Endothelial cell of umbilical vein (primary cell): ENCODE measurements at regions of chr2 and their contacts with region 1.

Region 1: DNA sequence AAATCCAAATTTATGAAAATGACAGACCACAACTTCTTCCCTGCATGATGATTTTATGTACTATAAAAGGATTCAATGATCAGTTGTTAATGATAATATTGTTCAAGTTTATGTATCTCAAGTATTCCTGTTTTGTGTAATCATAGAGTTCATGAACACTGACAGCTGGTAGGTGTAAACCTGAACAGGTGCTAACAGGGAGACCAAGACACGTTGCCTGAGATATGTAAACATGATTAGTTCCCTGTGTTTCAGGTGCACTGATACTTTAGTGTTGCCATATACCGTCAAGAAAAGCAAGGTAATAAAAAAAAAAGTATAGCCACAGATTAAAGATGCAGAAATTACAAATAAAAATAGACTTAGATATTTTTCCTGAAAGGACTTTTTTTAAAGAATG is 131.8 kb downstream of the BAZ2B start:
- DNase-seq: no peak
- H3K4me3 ChIP-seq: no peak overlapping the region
- H3K27ac ChIP-seq: no peak overlapping the region
- H3K4me1 ChIP-seq: no peaks in the 10 kb centered on the region
- H3K27me3 ChIP-seq: no peaks in the 10 kb centered on the region
- CTCF ChIP-seq: no peak
- POLR2A ChIP-seq: no peak

Region 2: GRCh38 chr2:159427048-159427447 is 57.5 kb before region 1 on chr2:
- CTCF ChIA-PET with region 1: no interaction called
- POLR2A ChIA-PET with region 1: no interaction called
- dilution Hi-C with region 1: no loop called
- intact Hi-C with region 1: loop called (anchors 2 kb)
- DNase-seq: no peak
- H3K4me3 ChIP-seq: no peak overlapping the region
- H3K27ac ChIP-seq: no peak overlapping the region
- H3K4me1 ChIP-seq: peaks cover 6% of the 10 kb centered on the region
- H3K27me3 ChIP-seq: no peaks in the 10 kb centered on the region
- CTCF ChIP-seq: no peak
- POLR2A ChIP-seq: no peak

Region 3: DNA sequence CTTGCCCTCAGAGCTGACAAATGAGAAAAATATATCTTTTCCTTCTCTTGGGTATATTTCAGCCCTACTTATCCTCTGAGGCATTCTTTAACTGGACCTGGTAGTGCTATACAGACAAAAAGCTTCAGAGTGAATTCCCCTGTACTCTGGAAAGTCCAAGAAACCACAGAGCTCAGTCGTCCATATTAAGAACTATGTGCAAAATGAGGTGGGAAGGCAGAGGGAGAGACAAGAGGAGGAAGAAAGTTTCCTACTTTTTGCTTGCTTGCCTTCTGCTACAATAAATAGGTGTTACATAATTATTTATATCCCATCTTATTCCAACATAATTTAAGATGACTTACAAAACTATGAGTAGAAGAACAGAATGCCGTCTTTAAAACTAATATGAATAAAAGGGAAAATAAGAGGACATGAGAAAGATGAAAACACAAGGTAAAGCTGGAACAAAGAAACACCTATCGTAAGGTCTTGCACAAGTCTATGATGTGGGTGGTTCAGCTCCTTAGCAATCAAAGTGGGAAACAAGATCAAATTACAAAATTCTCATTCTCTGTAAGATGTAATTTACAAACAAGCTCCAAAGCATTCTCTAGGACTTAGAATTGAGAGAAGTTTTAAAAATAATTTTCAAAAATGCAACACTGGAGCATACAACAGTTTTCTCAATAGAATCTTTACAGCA is 33.9 kb after region 1 on chr2:
- CTCF ChIA-PET with region 1: interaction called, 3 read pairs
- POLR2A ChIA-PET with region 1: no interaction called
- dilution Hi-C with region 1: no loop called
- intact Hi-C with region 1: loop called (anchors 1 kb)
- DNase-seq: no peak
- H3K4me3 ChIP-seq: no peak overlapping the region
- H3K27ac ChIP-seq: no peak overlapping the region
- H3K4me1 ChIP-seq: peaks cover 18% of the 10 kb centered on the region
- H3K27me3 ChIP-seq: no peaks in the 10 kb centered on the region
- CTCF ChIP-seq: no peak
- POLR2A ChIP-seq: no peak